Ascending aorta (tissue), 2 donors: ENCODE measurements at regions of chr1 and their contacts with region 1.

Region 1: DNA sequence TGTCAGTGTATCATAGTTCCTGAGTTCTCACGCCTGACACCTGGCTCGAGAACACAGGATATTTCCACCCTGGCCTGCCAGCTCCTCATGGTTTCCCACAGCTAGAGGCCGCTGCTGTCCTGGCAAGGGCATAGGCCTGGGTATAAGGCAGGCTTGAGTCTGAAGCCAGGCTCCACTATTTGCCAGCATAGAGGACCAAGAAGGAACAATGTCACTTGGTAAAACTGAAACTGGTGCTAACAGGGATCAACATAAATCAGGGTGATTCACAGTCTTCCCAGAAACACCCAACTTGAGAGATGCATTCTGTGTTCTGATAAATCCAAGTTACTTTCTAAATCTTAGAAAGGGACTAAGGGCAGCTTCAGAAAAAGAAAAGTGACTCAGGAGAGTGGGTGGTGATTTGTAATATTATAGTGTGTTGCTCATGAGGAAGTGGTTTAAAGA is 6.9 kb upstream of the S100A2 start:
- DNase-seq: peak in 1 of 2 donors; percentile 93
- H3K4me3 ChIP-seq: no peak overlapping the region
- H3K27ac ChIP-seq: peak overlapping the region; percentile 70 to 82
- H3K4me1 ChIP-seq: peaks cover 4 to 17% of the 10 kb centered on the region in 2 donors
- H3K27me3 ChIP-seq: no peaks in the 10 kb centered on the region
- CTCF ChIP-seq: peak; percentile 85 to 92 (median 90)

Region 2: GRCh38 chr1:153032677-153033308 is 539.8 kb before region 1 on chr1:
- intact Hi-C with region 1: no loop called
- DNase-seq: no peak
- H3K4me3 ChIP-seq: no peak overlapping the region
- H3K27ac ChIP-seq: no peak overlapping the region
- H3K4me1 ChIP-seq: no peaks in the 10 kb centered on the region
- H3K27me3 ChIP-seq: no peaks in the 10 kb centered on the region
- CTCF ChIP-seq: no peak

Region 3: GRCh38 chr1:153352523-153352922 is 220.1 kb before region 1 on chr1:
- intact Hi-C with region 1: loop called (anchors 1 kb)
- DNase-seq: peak in 1 of 2 donors; percentile 80
- H3K4me3 ChIP-seq: no peak overlapping the region
- H3K27ac ChIP-seq: no peak overlapping the region
- H3K4me1 ChIP-seq: no peaks in the 10 kb centered on the region
- H3K27me3 ChIP-seq: no peaks in the 10 kb centered on the region
- CTCF ChIP-seq: peak; percentile 82 to 92 (median 84)

Region 4: GRCh38 chr1:153510984-153511410 is 61.6 kb before region 1 on chr1:
- intact Hi-C with region 1: loop called (anchors 1 kb)
- DNase-seq: peak in 1 of 2 donors; percentile 93
- H3K4me3 ChIP-seq: no peak overlapping the region
- H3K27ac ChIP-seq: no peak overlapping the region
- H3K4me1 ChIP-seq: peaks cover 11 to 24% of the 10 kb centered on the region in 2 donors
- H3K27me3 ChIP-seq: no peaks in the 10 kb centered on the region
- CTCF ChIP-seq: peak; percentile 93 to 95 (median 93)

Region 5: GRCh38 chr1:153532769-153533599 is 39.6 kb before region 1 on chr1:
- intact Hi-C with region 1: loop called (anchors 1 kb)
- DNase-seq: peak; percentile 65 to 95
- H3K4me3 ChIP-seq: peak overlapping the region; percentile 70 to 95
- H3K27ac ChIP-seq: peak overlapping the region; percentile 98 to 100
- H3K4me1 ChIP-seq: peaks cover 5 to 27% of the 10 kb centered on the region in 2 donors
- H3K27me3 ChIP-seq: no peaks in the 10 kb centered on the region
- CTCF ChIP-seq: peak; percentile 94 to 96 (median 96)

Region 6: GRCh38 chr1:153617675-153618074 is 45.1 kb after region 1 on chr1:
- intact Hi-C with region 1: loop called (anchors 2 kb)
- DNase-seq: peak in 1 of 2 donors; percentile 92
- H3K4me3 ChIP-seq: no peak overlapping the region
- H3K27ac ChIP-seq: peak overlapping the region in 1 of 2 donors; percentile 49
- H3K4me1 ChIP-seq: peaks cover 0 to 12% of the 10 kb centered on the region in 2 donors
- H3K27me3 ChIP-seq: no peaks in the 10 kb centered on the region
- CTCF ChIP-seq: peak; percentile 58 to 73 (median 58)

Region 7: DNA sequence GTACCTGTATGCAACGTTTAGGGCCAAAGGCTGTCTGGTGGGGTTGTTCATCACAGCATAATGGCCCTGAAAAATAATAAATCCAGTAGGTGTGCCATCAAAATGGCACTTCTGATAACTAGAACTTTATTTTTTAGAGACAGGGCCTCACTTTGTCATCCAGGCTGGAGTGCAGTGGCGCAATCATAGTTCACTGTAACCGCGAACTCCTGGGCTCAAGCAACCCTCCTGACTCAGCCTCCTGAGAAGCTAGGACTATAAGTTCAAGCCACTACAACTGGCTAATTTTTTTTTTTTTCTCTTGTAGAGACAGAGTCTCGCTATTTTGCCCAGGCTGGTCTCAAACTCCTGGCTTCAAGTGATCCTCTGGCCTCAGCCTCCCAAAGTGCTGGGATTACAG is 90.6 kb after region 1 on chr1:
- intact Hi-C with region 1: loop called (anchors 5 kb)
- DNase-seq: no peak
- H3K4me3 ChIP-seq: no peak overlapping the region
- H3K27ac ChIP-seq: no peak overlapping the region
- H3K4me1 ChIP-seq: peaks cover 0 to 4% of the 10 kb centered on the region in 2 donors
- H3K27me3 ChIP-seq: no peaks in the 10 kb centered on the region
- CTCF ChIP-seq: no peak

Region 8: DNA sequence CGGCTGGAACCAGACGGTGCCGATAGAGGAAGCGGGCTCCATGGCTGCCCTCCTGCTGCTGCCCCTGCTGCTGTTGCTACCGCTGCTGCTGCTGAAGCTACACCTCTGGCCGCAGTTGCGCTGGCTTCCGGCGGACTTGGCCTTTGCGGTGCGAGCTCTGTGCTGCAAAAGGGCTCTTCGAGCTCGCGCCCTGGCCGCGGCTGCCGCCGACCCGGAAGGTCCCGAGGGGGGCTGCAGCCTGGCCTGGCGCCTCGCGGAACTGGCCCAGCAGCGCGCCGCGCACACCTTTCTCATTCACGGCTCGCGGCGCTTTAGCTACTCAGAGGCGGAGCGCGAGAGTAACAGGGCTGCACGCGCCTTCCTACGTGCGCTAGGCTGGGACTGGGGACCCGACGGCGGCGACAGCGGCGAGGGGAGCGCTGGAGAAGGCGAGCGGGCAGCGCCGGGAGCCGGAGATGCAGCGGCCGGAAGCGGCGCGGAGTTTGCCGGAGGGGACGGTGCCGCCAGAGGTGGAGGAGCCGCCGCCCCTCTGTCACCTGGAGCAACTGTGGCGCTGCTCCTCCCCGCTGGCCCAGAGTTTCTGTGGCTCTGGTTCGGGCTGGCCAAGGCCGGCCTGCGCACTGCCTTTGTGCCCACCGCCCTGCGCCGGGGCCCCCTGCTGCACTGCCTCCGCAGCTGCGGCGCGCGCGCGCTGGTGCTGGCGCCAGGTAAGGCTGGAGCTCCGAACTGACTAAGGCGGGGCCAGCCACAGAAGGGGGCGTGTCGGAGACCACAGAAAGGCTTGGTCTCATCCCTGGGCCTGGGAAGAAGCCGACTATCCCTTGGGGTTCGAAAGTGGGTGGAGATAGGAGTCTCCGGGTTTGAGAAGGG is 203.1 kb after region 1 on chr1:
- intact Hi-C with region 1: loop called (anchors 5 kb)
- DNase-seq: peak in 1 of 2 donors; percentile 88
- H3K4me3 ChIP-seq: peak overlapping the region; percentile 78 to 85
- H3K27ac ChIP-seq: peak overlapping the region; percentile 92 to 93
- H3K4me1 ChIP-seq: peaks cover 22 to 60% of the 10 kb centered on the region in 2 donors
- H3K27me3 ChIP-seq: no peaks in the 10 kb centered on the region
- CTCF ChIP-seq: peak in 1 of 3 experiments; percentile 25